B cell (primary cell): ENCODE measurements at regions of chr6 and their contacts with region 1.

Region 1: GRCh38 chr6:109073344-109074132 is 21.1 kb downstream of the SESN1 start:
- DNase-seq: peak; percentile 83
- ATAC-seq: peak; percentile 49
- H3K4me3 ChIP-seq: no peak overlapping the region
- H3K4me3 Mint-ChIP-seq: no peak overlapping the region
- H3K27ac ChIP-seq: no peak overlapping the region
- H3K27ac Mint-ChIP-seq: no peak overlapping the region
- H3K4me1 ChIP-seq: peaks cover 0 to 8% of the 10 kb centered on the region in 2 donors
- H3K4me1 Mint-ChIP-seq: peaks cover 5% of the 10 kb centered on the region
- H3K27me3 ChIP-seq: no peaks in the 10 kb centered on the region
- H3K27me3 Mint-ChIP-seq: no peaks in the 10 kb centered on the region
- CTCF ChIP-seq: peak; percentile 85

Region 2: DNA sequence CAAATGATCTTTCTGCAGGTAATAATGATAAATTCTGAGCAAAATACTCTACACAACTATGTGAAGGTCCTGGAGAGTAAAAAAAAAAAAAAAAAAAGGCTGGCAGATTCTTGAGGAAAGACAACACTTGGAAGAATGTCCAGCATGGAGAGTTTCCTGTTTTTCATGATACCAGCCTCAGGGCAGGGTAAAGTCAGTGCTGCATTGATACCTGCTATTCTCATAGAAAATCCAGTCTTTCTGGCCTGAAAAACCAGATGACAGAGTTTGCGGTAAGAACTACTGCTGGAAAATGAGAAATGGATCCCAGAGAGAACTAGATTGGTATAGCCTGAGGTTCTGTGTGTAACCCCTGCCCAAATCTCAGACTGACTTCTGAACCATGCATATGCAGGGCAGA is 689.6 kb before region 1 on chr6:
- CTCF ChIA-PET with region 1: no interaction called
- POLR2A ChIA-PET with region 1: no interaction called
- intact Hi-C with region 1: no loop called
- DNase-seq: no peak
- ATAC-seq: no peak
- H3K4me3 ChIP-seq: no peak overlapping the region
- H3K4me3 Mint-ChIP-seq: no peak overlapping the region
- H3K27ac ChIP-seq: no peak overlapping the region
- H3K27ac Mint-ChIP-seq: no peak overlapping the region
- H3K4me1 ChIP-seq: no peaks in the 10 kb centered on the region
- H3K4me1 Mint-ChIP-seq: no peaks in the 10 kb centered on the region
- H3K27me3 ChIP-seq: no peaks in the 10 kb centered on the region
- H3K27me3 Mint-ChIP-seq: no peaks in the 10 kb centered on the region
- CTCF ChIP-seq: no peak

Region 3: DNA sequence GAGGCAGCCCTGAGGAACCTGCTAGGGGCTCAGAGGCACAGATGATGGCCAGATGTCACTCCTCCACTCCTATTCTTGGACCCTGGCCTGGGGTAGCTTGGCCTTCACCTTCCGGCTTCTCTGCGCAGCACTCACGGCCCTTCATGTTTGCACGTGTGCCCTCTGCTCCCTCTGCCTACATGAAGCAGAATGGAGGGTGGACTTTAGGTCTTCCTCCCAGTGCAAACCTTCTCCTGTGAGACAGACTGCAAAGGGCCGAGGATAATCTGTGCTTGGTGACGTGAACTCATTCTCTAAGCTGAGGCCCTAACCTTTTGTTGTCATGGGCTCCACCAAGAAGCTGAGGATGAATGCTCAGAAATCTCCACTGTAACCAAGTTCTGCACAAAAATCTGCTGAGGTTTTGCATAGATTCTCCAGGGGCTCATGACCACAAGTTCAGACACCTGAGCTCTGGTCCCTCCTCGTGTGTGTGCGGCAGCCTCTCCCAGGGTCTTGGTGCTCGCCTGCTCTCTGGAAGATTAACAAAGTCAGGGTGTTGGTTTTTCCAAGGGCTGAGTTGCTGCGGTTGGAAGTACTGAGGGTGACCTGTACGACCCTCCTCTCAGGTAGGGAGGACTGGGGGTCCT is 538.3 kb before region 1 on chr6:
- CTCF ChIA-PET with region 1: interaction called, 247 read pairs
- POLR2A ChIA-PET with region 1: no interaction called
- intact Hi-C with region 1: no loop called
- DNase-seq: no peak
- ATAC-seq: no peak
- H3K4me3 ChIP-seq: no peak overlapping the region
- H3K4me3 Mint-ChIP-seq: no peak overlapping the region
- H3K27ac ChIP-seq: no peak overlapping the region
- H3K27ac Mint-ChIP-seq: no peak overlapping the region
- H3K4me1 ChIP-seq: no peaks in the 10 kb centered on the region
- H3K4me1 Mint-ChIP-seq: peaks cover 3% of the 10 kb centered on the region
- H3K27me3 ChIP-seq: no peaks in the 10 kb centered on the region
- H3K27me3 Mint-ChIP-seq: peaks cover 3% of the 10 kb centered on the region
- CTCF ChIP-seq: no peak

Region 4: DNA sequence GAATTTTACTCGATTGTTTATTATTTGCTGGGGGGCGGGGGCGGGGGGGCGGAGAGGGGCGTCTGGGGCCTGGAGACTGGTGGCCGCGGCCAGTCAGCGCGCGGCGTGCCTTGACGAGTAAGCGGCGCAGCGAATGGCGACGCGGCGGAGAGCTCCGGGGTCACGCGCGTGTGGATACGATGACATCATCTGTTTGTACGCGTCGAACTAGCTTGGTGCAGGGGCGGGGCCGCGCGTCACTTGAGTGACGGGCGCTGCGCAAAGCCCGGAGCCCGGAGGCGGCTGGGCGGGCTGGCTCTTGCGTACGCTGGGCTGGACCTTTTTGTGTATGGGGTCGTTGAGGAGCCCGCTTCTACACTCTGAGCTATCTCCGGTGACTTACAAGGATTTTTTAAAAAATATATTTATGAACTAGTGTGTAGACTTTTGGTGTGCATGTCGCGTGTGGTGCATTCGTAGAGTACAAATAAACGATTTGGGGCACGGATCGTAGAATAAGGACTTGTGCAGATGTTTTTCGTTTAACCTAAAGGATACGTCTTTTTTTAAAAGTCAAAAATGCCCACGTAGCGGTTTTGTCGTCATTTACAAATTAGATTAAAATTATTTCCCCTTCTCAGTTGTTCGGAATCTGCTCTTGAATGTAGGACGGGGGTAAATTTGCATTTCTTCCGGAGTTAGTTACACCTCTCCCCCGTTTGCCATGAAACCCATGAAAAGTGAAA is 515.0 kb before region 1 on chr6:
- CTCF ChIA-PET with region 1: interaction called, 14 read pairs
- POLR2A ChIA-PET with region 1: interaction called, 3 read pairs
- intact Hi-C with region 1: no loop called
- DNase-seq: peak; percentile 99
- ATAC-seq: peak; percentile 64
- H3K4me3 ChIP-seq: peak overlapping the region; percentile 83 to 98 (median 96)
- H3K4me3 Mint-ChIP-seq: peak overlapping the region; percentile 100
- H3K27ac ChIP-seq: peak overlapping the region; percentile 100
- H3K27ac Mint-ChIP-seq: peak overlapping the region; percentile 100
- H3K4me1 ChIP-seq: peaks cover 17 to 20% of the 10 kb centered on the region in 2 donors
- H3K4me1 Mint-ChIP-seq: peaks cover 22% of the 10 kb centered on the region
- H3K27me3 ChIP-seq: peaks cover 0 to 6% (median 0%) of the 10 kb centered on the region in 4 experiments
- H3K27me3 Mint-ChIP-seq: peaks cover 5% of the 10 kb centered on the region
- CTCF ChIP-seq: no peak

Region 5: GRCh38 chr6:108835218-108835850 is 238.2 kb before region 1 on chr6:
- CTCF ChIA-PET with region 1: interaction called, 49 read pairs
- POLR2A ChIA-PET with region 1: no interaction called
- intact Hi-C with region 1: loop called (anchors 1 kb)
- DNase-seq: peak; percentile 86
- ATAC-seq: peak; percentile 96
- H3K4me3 ChIP-seq: no peak overlapping the region
- H3K4me3 Mint-ChIP-seq: no peak overlapping the region
- H3K27ac ChIP-seq: no peak overlapping the region
- H3K27ac Mint-ChIP-seq: no peak overlapping the region
- H3K4me1 ChIP-seq: peaks cover 14 to 17% of the 10 kb centered on the region in 2 donors
- H3K4me1 Mint-ChIP-seq: peaks cover 25% of the 10 kb centered on the region
- H3K27me3 ChIP-seq: peaks cover 0 to 6% (median 2%) of the 10 kb centered on the region in 4 experiments
- H3K27me3 Mint-ChIP-seq: peaks cover 15% of the 10 kb centered on the region
- CTCF ChIP-seq: peak; percentile 92

Region 6: DNA sequence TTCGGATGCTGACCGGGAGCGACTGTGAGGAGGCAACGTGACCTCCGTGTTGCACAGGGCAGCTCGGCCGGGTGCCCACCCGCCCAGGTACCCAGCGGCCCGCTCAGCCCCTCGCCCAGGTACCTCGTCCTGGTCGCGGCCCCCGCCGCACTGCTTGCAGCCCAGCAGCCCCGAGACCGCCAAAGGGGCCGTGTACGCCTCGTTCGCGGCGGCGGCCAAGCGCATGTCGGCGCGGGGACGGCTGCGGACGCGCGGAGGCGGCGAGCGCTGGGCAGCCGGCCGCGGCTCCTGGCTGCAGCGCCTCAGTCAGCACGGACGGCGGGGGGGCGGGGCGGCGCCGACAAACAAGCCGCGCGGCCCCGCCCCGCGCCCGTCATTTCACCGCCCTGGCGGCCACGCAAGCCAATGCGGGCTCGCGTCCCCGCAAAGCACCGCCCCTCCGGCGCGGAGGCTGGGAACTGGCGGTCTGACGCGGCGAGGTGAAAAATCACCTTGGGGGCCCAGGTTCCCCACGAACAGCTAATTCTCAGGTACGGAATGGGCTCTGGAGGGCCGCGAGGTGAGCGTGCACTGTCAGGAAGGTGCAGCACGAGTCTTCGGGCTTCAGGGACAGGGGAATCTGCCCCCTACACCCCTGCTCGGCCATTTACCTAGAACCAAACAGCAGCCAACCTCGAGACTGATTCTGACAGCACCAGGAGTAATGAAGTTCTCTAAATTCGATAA is 64.1 kb before region 1 on chr6:
- CTCF ChIA-PET with region 1: interaction called, 22 read pairs
- POLR2A ChIA-PET with region 1: no interaction called
- intact Hi-C with region 1: loop called (anchors 5 kb)
- DNase-seq: peak; percentile 94
- ATAC-seq: peak; percentile 98
- H3K4me3 ChIP-seq: peak overlapping the region; percentile 77 to 97 (median 89)
- H3K4me3 Mint-ChIP-seq: peak overlapping the region; percentile 98
- H3K27ac ChIP-seq: peak overlapping the region; percentile 87 to 90
- H3K27ac Mint-ChIP-seq: peak overlapping the region; percentile 97
- H3K4me1 ChIP-seq: peaks cover 32 to 52% of the 10 kb centered on the region in 2 donors
- H3K4me1 Mint-ChIP-seq: peaks cover 64% of the 10 kb centered on the region
- H3K27me3 ChIP-seq: no peaks in the 10 kb centered on the region
- H3K27me3 Mint-ChIP-seq: no peaks in the 10 kb centered on the region
- CTCF ChIP-seq: no peak